ENCODE measurements at regions of chr3 and their contacts with region 1.

Region 1: DNA sequence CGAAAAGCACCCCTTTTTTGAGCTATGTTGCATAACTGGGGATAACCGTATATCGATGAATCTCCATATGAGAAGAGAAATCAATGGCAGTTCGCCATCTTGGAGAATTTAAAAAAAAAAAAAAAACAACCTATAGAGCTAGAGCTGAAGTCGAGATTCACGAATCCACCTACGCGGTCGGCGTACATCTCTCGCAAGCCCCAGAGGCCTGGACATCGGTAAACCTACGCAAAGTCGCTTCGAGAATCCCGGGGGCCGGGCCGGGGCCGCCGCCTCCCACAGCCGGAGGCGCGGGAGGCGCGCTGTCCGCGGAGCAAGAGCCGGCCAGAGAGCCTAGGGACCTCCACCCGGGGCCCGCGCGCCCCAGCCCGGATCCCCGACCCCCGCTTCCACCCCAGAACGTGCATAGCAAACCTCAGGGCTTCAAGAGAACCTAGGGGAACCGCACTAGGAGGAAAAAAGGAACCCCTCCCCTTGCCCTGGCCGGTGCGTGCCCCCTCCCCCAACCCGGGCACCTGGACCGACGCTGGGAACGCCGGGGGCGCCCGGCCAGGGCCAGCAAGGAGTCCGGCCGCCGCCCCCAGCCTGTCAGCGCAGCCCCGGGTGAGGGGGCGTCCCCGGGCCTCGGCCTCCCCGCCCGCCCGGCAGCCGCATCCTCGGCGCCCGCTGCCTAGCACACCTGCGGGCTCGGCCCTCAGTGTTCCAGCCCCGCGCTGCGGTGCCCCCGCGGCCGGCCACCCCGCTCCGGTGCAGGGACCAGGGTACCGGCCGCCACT is 567 bp downstream of the PFN2 start:
- DNase-seq: peak; percentile 73 to 87
- H3K4me3 ChIP-seq: peak overlapping the region; percentile 64
- H3K4me1 ChIP-seq: peaks cover 17% of the 10 kb centered on the region
- H3K27me3 ChIP-seq: no peaks in the 10 kb centered on the region

Region 2: GRCh38 chr3:148084931-148085330 is 1885.2 kb before region 1 on chr3:
- in situ Hi-C with region 1: no loop called
- DNase-seq: no peak
- H3K4me3 ChIP-seq: no peak overlapping the region
- H3K4me1 ChIP-seq: no peaks in the 10 kb centered on the region
- H3K27me3 ChIP-seq: no peaks in the 10 kb centered on the region

Region 3: GRCh38 chr3:149917124-149917667 is 52.9 kb before region 1 on chr3:
- in situ Hi-C with region 1: no loop called
- DNase-seq: no peak
- H3K4me3 ChIP-seq: no peak overlapping the region
- H3K4me1 ChIP-seq: no peaks in the 10 kb centered on the region
- H3K27me3 ChIP-seq: no peaks in the 10 kb centered on the region

Region 4: GRCh38 chr3:150079029-150079739 is 109.1 kb after region 1 on chr3:
- in situ Hi-C with region 1: no loop called
- DNase-seq: no peak
- H3K4me3 ChIP-seq: no peak overlapping the region
- H3K4me1 ChIP-seq: peaks cover 9% of the 10 kb centered on the region
- H3K27me3 ChIP-seq: no peaks in the 10 kb centered on the region

Region 5: DNA sequence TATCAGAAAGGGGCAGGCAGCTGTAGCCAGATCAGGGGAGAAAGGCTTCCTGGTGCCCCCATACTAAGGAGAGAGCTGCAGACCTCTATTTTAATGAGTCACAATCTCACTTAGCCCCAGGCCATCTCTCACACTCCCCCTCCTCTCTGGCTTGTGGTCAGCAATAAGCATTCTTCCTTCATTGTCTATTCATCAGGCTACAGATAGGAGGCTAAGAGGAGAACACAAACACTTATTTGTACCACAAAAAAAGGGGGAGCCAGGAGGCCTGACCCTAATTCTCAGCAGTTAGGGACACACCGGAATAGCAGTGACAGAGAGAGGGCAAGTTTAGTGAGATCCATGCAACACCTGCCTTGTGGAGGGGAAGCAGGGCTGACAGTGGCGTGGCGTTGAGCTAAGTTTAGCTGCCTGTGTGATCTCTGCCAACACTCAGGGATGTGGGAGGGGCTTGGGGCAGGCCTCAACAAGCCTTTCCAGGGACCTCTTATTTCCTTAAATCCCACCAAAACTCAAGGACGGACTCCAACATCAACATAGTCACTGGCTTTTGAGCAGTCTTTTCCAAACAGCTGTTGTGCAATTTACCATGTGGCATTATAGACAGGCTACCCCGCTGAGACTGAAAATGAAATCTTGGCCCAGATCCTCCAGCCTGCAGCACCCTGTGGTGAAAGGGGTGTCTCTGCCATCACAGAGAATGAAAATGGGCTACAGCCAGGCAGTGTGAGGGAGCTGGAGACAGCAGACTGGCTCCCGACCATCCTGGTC is 246.1 kb after region 1 on chr3:
- in situ Hi-C with region 1: loop called (anchors 25 kb)
- DNase-seq: peak; percentile 74
- H3K4me3 ChIP-seq: no peak overlapping the region
- H3K4me1 ChIP-seq: peaks cover 21% of the 10 kb centered on the region
- H3K27me3 ChIP-seq: no peaks in the 10 kb centered on the region

Measured in HAP-1 (cell line).